MCF 10A (cell line): ENCODE measurements at regions of chr2 and their contacts with region 1.

Region 1: DNA sequence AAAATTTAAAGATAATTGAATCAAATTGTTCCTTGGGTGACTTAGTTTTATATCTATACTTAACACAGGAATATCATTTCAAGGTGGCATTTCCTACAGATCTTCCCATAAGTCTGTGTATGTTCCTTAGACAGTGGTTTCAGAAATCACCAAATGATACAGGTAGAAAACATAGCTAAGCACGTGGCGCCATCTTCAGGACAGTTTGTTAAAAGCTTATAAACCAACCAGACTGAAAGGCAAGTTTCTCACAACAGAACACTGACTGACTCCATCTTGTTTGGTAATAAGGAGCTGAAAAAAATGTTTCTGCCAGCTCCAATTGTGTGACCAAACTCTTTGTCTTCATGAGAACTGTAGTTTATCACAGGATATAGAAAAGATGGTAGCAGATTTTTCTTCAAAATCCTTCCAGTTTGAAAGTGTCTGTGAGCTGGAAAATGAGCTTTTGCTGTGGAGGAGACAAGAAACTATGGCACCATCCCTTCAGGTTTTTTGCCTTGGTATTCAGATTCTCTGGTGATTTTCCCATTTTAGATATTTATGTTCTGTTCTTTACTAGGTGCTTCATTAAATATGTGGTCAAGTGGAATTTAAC is 34.8 kb upstream of the NEUROD1 start:
- DNase-seq: peak; percentile 87
- H3K4me3 Mint-ChIP-seq: no peak overlapping the region
- H3K27ac Mint-ChIP-seq: no peak overlapping the region
- H3K4me1 Mint-ChIP-seq: no peaks in the 10 kb centered on the region
- H3K27me3 Mint-ChIP-seq: no peaks in the 10 kb centered on the region
- CTCF ChIP-seq: peak; percentile 74

Region 2: DNA sequence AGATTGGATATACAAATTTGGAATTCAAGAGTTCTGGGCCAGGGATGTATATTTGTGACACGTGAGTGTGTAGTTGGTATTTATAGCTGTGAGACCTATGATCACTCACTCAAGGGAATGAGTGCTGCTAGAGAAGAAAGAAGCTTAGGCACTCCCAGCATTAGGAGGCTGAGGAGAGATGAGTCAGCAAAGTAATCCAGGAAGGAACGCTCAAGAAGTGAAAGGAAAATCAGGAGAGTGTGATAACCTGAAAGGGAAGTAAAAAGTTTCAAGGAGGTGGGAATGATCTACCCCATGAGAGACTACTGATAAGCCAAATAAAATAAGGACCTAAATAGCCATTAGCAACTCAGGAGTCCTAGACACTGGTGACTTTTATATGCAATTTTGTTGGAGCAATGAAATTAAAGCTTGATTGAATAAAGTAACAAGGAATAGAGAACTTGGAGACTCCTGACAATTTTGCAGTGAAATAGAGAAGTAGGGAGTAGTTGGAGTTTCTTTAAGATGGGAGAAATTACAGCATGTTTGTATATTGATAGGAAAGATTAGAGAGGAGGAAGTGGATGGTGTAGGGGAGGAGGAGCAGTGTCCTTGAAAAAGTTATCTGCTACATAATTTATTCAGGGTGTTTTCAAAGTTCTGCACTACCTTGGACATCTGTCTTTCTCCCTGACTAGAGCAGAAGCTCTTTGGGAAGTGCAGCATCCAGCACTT is 644.9 kb before region 1 on chr2:
- CTCF ChIA-PET with region 1: interaction called, 13 read pairs
- POLR2A ChIA-PET with region 1: no interaction called
- intact Hi-C with region 1: no loop called
- DNase-seq: peak; percentile 73
- H3K4me3 Mint-ChIP-seq: no peak overlapping the region
- H3K27ac Mint-ChIP-seq: no peak overlapping the region
- H3K4me1 Mint-ChIP-seq: peaks cover 24% of the 10 kb centered on the region
- H3K27me3 Mint-ChIP-seq: no peaks in the 10 kb centered on the region
- CTCF ChIP-seq: no peak

Region 3: GRCh38 chr2:181085734-181086133 is 629.4 kb before region 1 on chr2:
- CTCF ChIA-PET with region 1: interaction called, 15 read pairs
- POLR2A ChIA-PET with region 1: no interaction called
- intact Hi-C with region 1: no loop called
- DNase-seq: no peak
- H3K4me3 Mint-ChIP-seq: no peak overlapping the region
- H3K27ac Mint-ChIP-seq: no peak overlapping the region
- H3K4me1 Mint-ChIP-seq: no peaks in the 10 kb centered on the region
- H3K27me3 Mint-ChIP-seq: no peaks in the 10 kb centered on the region
- CTCF ChIP-seq: no peak

Region 4: DNA sequence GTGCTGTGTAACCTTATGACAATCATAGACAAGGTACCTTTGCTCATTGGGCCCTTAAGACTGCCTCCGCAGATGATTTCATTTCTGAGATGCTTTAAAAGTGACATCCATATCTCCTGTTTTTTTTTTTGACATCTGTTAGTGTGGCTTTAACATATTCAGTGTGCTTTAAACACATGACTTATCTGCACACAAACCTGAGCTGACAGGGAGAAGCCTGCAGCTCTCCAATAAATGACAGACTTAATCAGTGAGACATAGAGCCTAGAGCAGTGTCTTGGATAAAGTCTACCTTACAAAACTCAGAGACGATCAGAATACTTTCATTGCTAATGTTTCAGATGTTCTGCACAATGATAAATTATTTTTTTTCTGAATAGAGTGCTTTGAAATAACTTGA is 604.1 kb before region 1 on chr2:
- CTCF ChIA-PET with region 1: interaction called, 81 read pairs
- POLR2A ChIA-PET with region 1: no interaction called
- intact Hi-C with region 1: no loop called
- DNase-seq: no peak
- H3K4me3 Mint-ChIP-seq: no peak overlapping the region
- H3K27ac Mint-ChIP-seq: no peak overlapping the region
- H3K4me1 Mint-ChIP-seq: peaks cover 8% of the 10 kb centered on the region
- H3K27me3 Mint-ChIP-seq: no peaks in the 10 kb centered on the region
- CTCF ChIP-seq: no peak

Region 5: DNA sequence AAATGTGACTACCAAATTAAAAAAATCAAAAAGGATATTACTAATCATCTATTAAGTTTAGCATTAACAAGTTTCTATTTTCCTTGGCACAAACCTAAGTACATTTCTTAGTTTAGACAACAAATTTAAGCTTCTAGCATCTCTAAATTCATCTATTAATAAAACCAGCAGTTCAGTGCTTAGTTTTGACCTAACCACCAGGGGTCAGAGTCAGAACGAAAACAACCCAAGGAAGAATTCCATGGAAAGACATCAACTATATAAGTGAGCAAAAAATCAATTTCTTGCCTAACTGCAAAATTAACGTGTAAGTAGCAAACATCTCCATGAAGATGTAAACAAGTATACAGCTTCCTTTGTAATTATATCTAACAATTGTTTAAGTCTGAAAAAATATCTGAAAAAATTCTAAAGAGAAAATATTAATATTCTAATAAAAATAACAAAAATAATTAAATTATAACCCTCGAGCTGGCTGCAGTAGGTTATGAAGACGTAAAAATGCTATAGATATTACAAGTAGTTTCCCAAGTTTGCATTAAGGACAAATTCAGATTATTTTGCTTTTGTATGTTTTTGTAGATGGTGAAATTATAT is 141.9 kb before region 1 on chr2:
- CTCF ChIA-PET with region 1: interaction called, 149 read pairs
- POLR2A ChIA-PET with region 1: interaction called, 7 read pairs
- intact Hi-C with region 1: loop called (anchors 1 kb)
- DNase-seq: peak; percentile 53
- H3K4me3 Mint-ChIP-seq: no peak overlapping the region
- H3K27ac Mint-ChIP-seq: no peak overlapping the region
- H3K4me1 Mint-ChIP-seq: no peaks in the 10 kb centered on the region
- H3K27me3 Mint-ChIP-seq: no peaks in the 10 kb centered on the region
- CTCF ChIP-seq: peak; percentile 37

Region 6: DNA sequence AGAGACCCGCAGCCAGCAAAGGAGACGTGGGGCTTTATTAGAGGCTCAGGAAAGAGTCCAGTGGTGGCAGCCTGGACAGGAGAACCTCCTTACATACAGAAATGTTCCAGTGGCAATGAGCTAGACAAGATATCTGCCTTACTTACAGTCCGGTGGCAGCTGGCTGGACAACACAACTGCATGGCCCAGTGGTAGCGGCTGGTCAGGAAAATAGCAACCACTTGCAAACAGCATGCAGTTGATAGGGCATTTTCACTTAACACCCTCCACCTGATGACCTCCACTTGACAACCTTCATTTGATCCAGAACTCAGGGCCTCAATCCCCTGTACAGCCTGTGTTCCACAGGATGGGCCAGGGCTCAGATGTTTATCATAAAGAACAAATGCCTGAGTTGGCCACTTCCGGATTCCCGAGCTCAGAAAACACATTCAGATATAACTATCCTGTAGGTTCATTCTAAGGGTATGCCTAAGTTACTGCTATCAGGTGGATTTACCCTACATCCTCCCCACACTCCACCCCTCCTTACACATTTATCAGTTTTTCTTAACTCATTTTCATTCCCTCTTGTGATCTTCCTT is 113.1 kb after region 1 on chr2:
- CTCF ChIA-PET with region 1: no interaction called
- POLR2A ChIA-PET with region 1: no interaction called
- intact Hi-C with region 1: no loop called
- DNase-seq: no peak
- H3K4me3 Mint-ChIP-seq: no peak overlapping the region
- H3K27ac Mint-ChIP-seq: no peak overlapping the region
- H3K4me1 Mint-ChIP-seq: peaks cover 4% of the 10 kb centered on the region
- H3K27me3 Mint-ChIP-seq: no peaks in the 10 kb centered on the region
- CTCF ChIP-seq: no peak